ENCODE measurements at regions of chr17 and their contacts with region 1.

Region 1: DNA sequence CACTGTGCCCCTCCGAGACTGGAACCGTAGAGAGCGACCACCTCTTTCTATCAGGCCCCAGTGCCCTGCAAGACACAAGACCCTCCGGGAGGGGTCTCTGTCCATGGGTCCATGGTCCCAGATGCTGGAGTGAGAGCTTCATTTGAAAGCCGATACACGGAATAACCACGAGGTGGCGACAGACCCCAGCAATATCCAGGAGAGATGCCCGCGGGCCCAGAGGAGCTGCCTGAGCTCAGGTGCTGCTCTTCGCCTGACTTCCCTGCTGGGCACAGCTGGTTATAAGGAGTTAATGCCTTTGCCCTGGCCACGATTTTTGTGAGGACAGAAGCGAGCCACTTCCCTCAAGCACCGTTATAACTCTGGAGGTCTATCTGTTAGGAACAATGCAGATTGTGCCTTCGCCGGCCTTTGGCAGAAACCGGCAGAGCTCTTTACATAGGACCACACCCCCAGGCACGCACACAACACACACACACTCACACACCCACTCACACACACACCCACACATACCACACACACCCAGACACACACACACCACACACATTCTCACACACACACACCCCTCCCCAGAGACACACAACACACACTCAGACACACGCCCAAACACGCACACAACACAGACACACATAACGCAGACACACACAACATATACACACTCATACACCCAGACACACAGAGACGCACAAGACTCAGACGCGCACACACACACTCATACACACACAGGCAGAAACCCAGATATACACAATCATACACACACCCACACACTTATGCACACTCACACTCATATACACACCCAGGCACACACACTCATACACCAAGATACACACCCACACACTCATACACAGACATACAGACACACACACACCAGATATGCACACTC is 436.4 kb downstream of the SOX9 start:
- DNase-seq: peak; percentile 83 to 93
- ATAC-seq: peak; percentile 51 to 62
- H3K4me3 ChIP-seq: no peak overlapping the region
- H3K27ac ChIP-seq: peak overlapping the region in 1 of 2 experiments; percentile 61; a peak in 3 of 6 replicates
- H3K4me1 ChIP-seq: peaks cover 45% of the 10 kb centered on the region
- CTCF ChIP-seq: peak; percentile 97
- EP300 ChIP-seq: no peak
- POLR2A ChIP-seq: no peak
- RAD21 ChIP-seq: peak; percentile 94

Region 2: DNA sequence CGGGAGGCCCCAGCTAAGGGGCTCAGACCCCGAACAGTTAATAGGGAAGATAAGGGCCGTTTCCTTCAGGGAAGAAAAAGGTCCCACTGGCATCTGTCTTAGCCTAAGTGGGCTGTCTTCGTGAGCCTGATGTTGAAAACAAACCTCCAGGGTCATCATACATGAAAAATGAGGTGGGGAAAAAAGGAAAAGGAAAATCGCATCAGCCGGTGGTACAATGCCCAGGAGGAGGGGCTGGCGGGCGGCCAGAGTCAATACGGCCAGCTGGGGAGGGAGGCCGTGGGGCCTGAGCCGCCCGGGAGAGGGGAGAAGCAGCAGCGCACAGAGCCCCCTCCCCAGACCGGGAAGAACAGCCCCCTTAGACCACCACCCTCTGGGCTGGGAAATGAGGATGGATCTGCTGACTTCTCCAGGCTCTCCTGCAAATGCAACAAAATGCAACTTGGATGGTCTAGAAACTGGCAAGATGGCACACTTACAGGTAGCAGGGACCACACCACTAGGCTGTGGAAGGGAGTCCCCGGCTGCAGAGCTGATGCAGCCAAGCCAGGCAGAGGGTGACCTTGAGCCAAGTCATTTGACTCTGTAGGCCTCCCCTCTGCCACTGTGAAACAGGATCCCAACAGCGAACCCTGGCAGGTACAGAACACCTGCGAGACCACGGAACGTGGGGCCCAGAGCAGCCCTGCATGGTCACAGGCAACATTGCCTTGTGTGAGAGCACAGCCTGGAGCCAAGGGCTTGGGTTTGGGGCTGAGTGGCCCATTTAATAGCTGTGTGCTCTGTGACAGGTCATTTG is 12.2 kb after region 1 on chr17:
- CTCF ChIA-PET with region 1: interaction called, 26 read pairs
- POLR2A ChIA-PET with region 1: no interaction called
- DNase-seq: no peak
- ATAC-seq: no peak
- H3K4me3 ChIP-seq: no peak overlapping the region
- H3K27ac ChIP-seq: peak overlapping the region in 1 of 2 experiments; percentile 7; a peak in 2 of 6 replicates
- H3K4me1 ChIP-seq: peaks cover 61% of the 10 kb centered on the region
- CTCF ChIP-seq: no peak
- EP300 ChIP-seq: no peak
- POLR2A ChIP-seq: no peak
- RAD21 ChIP-seq: no peak

Region 3: GRCh38 chr17:72618001-72618509 is 60.9 kb after region 1 on chr17:
- CTCF ChIA-PET with region 1: interaction called, 47 read pairs
- POLR2A ChIA-PET with region 1: no interaction called
- DNase-seq: peak in 1 of 2 experiments; percentile 43
- ATAC-seq: no peak
- H3K4me3 ChIP-seq: no peak overlapping the region
- H3K27ac ChIP-seq: peak overlapping the region; percentile 89 to 99; a peak in 5 of 6 replicates
- H3K4me1 ChIP-seq: peaks cover 48% of the 10 kb centered on the region
- CTCF ChIP-seq: no peak
- EP300 ChIP-seq: no peak
- POLR2A ChIP-seq: no peak
- RAD21 ChIP-seq: no peak

Region 4: DNA sequence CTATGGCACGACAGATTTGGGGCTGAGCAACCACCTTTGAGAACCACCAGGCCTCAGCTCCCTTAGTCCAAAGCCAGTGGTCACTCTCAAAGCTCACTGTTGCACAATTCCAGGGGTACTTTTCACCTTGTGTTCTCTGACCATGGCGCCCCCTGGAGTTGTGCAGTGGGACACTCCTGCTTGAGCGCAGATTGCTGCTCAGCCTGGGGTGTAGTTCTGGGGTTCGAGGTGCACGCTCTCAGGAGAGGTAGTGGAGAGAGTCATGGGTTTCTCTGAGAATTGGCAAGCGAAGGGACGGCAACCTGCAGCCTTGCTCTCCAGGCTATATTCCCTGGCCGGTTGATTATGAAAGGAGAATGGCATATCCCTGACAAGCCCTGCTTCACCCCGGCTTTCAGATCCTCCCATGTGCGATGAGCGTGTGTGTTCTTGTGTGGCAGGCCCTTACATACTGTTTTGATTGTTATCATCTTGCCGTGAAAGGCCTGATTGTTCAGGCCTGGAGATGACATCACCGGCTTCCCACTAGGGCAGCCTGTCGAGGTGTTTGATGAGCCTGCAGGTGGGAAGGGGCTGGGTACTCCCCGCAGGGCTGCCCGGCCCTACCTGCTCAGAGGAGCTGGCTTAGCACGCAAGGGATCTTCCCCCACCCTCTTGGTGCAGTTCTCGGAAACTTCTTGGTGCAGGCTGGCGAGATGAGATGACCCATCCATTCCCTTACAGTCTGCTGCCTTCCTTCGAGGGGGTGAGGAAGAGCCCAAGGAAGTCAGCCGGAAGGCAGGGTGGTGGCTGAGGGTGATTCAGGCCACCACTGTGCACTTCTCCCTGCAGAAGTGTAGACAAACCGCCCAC is 104.1 kb after region 1 on chr17:
- CTCF ChIA-PET with region 1: interaction called, 72 read pairs
- POLR2A ChIA-PET with region 1: no interaction called
- DNase-seq: no peak
- ATAC-seq: no peak
- H3K4me3 ChIP-seq: no peak overlapping the region
- H3K27ac ChIP-seq: peak overlapping the region in 1 of 2 experiments; percentile 32; a peak in 3 of 6 replicates
- H3K4me1 ChIP-seq: peaks cover 17% of the 10 kb centered on the region
- CTCF ChIP-seq: 0 out of 3 replicates have a peak, but pooled peaks have one; percentile 23
- EP300 ChIP-seq: no peak
- POLR2A ChIP-seq: no peak
- RAD21 ChIP-seq: no peak

Region 5: DNA sequence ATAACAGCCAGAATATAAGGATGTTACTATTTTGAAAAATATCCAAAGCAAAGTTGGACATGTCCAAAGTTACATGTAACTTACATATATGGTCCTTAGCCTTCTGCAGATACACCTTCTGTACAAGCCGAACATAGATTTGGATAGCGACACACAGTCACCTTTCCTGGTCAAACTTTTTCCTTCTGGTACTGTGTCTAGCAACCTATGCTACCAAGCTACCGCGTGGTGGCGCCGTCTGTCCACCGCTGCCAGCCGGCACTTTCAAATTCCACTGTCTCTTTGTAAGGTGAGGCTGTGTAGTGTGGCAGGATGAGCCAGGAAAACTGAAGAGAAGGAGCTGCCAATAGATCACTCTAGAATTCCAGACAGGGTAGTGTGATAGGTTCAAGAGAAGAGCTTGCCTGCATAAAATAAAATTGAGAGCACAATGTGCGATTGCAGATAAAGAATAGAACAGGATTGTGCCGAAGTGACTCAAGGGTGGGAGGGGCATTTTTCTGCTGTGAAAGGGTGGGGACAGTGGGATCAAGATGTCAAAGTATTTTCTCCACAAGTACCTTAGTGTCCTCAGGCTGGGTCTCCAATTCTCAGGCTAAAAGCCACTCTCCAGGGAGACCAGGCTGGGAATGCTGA is 168.4 kb after region 1 on chr17:
- CTCF ChIA-PET with region 1: interaction called, 578 read pairs
- POLR2A ChIA-PET with region 1: interaction called, 13 read pairs
- DNase-seq: peak; percentile 72 to 83
- ATAC-seq: peak; percentile 85 to 86
- H3K4me3 ChIP-seq: no peak overlapping the region
- H3K27ac ChIP-seq: peak overlapping the region; percentile 11 to 61; a peak in 3 of 6 replicates
- H3K4me1 ChIP-seq: peaks cover 20% of the 10 kb centered on the region
- CTCF ChIP-seq: peak; percentile 97
- EP300 ChIP-seq: no peak
- POLR2A ChIP-seq: no peak
- RAD21 ChIP-seq: peak; percentile 95 to 96

Region 6: DNA sequence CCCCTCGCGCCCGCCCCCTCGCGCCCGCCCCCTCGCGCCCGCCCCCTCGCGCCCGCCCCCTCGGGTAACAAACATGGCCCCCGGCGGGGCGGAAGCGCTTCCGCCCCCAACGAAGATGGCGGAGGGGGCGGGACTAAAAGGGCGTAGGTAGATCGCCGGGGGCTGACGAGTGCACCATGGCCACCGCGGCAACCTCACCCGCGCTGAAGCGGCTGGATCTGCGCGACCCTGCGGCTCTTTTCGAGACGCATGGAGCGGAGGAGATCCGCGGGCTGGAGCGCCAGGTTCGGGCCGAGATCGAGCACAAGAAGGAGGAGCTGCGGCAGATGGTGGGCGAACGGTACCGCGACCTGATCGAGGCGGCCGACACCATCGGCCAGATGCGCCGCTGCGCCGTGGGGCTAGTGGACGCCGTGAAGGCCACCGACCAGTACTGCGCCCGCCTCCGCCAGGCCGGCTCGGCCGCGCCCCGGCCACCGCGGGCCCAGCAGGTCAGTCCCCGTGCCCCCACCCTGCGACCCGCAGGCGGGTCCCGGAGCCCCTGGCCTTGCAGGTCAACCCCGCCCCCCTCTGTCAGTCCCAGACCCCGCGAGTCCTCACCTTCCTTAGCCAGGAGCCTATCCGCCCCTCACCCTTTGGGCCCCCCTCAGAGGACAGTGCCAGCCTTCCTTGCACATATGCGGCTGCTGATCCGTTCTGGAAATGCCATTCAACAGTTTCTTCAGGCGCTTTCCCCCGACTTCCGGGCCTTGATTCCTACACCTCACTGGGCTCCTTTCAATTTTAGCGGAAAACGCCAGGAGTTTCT is 635.9 kb after region 1 on chr17 and contains the start of gene COG1:
- CTCF ChIA-PET with region 1: interaction called, 46 read pairs
- POLR2A ChIA-PET with region 1: interaction called, 4 read pairs
- DNase-seq: peak; percentile 91 to 96
- ATAC-seq: peak; percentile 72 to 80
- H3K4me3 ChIP-seq: peak within 1 kb of the TSS; percentile 79
- H3K27ac ChIP-seq: peak within 1 kb of the TSS; percentile 88 to 94
- H3K4me1 ChIP-seq: peaks cover 8% of the 10 kb centered on the region; the same call in 1 of the 3 replicates
- CTCF ChIP-seq: no peak
- EP300 ChIP-seq: no peak
- POLR2A ChIP-seq: peak; percentile 74
- RAD21 ChIP-seq: no peak
- polyA plus RNA-seq, gene COG1: 26.0 and 30.6 TPM in 2 replicates

Region 7: DNA sequence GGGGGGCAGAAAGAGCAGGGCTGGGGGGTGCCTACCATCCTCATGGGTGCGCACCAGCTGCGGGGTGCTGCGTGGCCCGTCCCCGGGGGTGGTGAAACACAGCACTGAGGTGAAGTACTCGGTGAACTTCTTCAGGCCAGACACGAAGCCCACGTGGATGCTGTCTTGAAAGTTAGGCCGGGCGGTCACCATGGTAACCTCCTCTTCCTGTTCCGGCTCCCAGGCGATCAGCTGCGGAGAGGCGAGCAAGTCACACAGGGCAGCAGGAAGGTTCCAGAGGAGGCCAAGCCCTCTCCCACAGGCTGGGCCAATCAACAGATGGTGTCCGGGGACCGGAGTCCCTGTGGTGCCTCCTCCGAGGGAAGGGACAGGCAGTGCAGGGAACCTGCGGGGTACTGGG is 844.7 kb after region 1 on chr17:
- CTCF ChIA-PET with region 1: no interaction called
- POLR2A ChIA-PET with region 1: no interaction called
- DNase-seq: no peak
- ATAC-seq: no peak
- H3K4me3 ChIP-seq: no peak overlapping the region
- H3K27ac ChIP-seq: no peak overlapping the region
- H3K4me1 ChIP-seq: no peaks in the 10 kb centered on the region
- CTCF ChIP-seq: no peak
- EP300 ChIP-seq: no peak
- POLR2A ChIP-seq: no peak
- RAD21 ChIP-seq: no peak

Measured in A549 (cell line).